ENCODE measurements at regions of chr4 and their contacts with region 1.

Region 1: GRCh38 chr4:152679414-152680281 is at the start of gene TMEM154:
- DNase-seq: peak; percentile 75
- H3K4me3 ChIP-seq: peak within 1 kb of the TSS; percentile 49 to 93 (median 83)
- H3K27ac ChIP-seq: peak within 1 kb of the TSS; percentile 85
- H3K4me1 ChIP-seq: peaks cover 44% of the 10 kb centered on the region
- H3K27me3 ChIP-seq: no peaks in the 10 kb centered on the region
- CTCF ChIP-seq: no peak
- POLR2A ChIP-seq: peak; percentile 84
- total RNA-seq, gene TMEM154: 43.6 and 50.0 TPM in 2 replicates

Region 2: DNA sequence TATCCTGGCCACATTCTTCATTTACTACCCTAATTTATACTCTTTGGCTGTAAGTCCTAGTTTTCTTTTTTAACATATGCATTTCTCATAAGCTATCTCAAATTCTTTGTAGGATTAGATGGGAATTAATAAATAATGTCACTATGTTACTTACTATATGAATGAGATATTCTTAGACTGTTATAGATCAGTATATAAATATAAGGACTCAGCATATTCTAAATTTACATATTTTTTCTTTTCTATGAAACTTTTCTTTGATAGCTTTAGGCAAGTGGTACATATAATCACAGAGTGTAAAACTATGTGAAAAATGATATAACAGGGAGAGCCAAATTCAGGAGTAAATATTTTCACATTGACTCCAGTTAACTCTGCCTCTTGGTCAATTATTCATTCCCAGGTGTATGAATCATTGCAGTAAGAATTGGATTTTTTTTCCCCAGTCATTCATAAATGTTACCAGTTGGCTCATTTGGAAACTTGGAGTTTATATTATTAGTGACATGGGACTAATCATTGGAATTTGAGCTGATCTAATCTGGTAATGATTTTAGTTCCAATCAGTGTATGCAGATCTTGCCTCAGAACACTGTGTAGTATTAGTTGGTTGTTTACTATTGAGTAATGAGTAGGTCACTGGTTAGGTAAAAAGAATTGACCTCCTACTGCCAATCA is 1245.3 kb before region 1 on chr4:
- CTCF ChIA-PET with region 1: no interaction called
- POLR2A ChIA-PET with region 1: no interaction called
- dilution Hi-C with region 1: no loop called
- intact Hi-C with region 1: no loop called
- DNase-seq: no peak
- H3K4me3 ChIP-seq: no peak overlapping the region
- H3K27ac ChIP-seq: no peak overlapping the region
- H3K4me1 ChIP-seq: no peaks in the 10 kb centered on the region
- H3K27me3 ChIP-seq: no peaks in the 10 kb centered on the region
- CTCF ChIP-seq: no peak
- POLR2A ChIP-seq: no peak

Region 3: GRCh38 chr4:152779513-152780266 is 100.0 kb after region 1 on chr4 and contains the starts of genes ARFIP1 and TIGD4:
- CTCF ChIA-PET with region 1: interaction called, 4 read pairs
- POLR2A ChIA-PET with region 1: no interaction called
- dilution Hi-C with region 1: no loop called
- intact Hi-C with region 1: loop called (anchors 1 kb)
- DNase-seq: peak; percentile 96
- H3K4me3 ChIP-seq: peak within 1 kb of the TSS; percentile 67 to 76 (median 74)
- H3K27ac ChIP-seq: peak within 1 kb of the TSS; percentile 56
- H3K4me1 ChIP-seq: peaks cover 21% of the 10 kb centered on the region
- H3K27me3 ChIP-seq: peaks cover 0 to 11% of the 10 kb centered on the region in 2 experiments
- CTCF ChIP-seq: peak in 1 of 2 donors; percentile 4
- POLR2A ChIP-seq: peak; percentile 62
- total RNA-seq, gene ARFIP1: 24.2 and 24.6 TPM in 2 replicates
- total RNA-seq, gene TIGD4: 0.14 and 0.18 TPM in 2 replicates

Measured in endothelial cell of umbilical vein (primary cell).